BJ (cell line): ENCODE measurements at regions of chrX and their contacts with region 1.

Region 1: GRCh38 chrX:110146521-110146920 is 143.6 kb downstream of the TMEM164 start:
- DNase-seq: no peak
- H3K4me3 ChIP-seq: no peak overlapping the region
- H3K27me3 ChIP-seq: no peaks in the 10 kb centered on the region
- CTCF ChIP-seq: peak; percentile 64

Region 2: DNA sequence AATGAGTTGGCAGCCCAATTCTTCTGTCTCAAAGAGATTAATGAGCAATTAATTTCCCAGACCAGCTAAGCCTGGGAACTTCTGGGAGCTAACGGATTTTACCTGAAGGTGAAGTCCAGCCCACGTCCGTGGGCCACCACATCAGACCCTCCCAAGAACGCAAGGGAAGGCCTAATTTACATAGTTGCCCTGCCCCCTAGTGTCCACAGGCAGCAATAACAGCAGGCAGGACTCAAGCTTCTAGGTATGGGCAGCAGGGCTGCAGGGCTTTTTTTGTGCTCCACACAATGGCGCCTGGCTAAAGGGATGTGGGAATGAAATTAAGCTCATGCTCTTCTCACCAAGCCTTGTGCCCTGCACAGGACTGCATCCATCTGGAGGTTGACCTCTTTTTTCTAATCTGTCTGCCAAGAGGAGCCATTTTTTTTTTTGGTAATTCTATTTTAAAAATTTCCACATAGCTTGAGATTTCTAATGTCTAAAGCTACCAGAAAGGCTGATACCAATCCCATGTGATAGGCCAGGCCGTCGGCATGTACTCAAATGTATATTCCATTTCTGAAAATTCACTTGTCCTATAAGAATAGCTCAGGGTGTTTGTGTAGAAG is 255.5 kb before region 1 on chrX:
- CTCF ChIA-PET with region 1: interaction called, 11 read pairs
- POLR2A ChIA-PET with region 1: no interaction called
- DNase-seq: no peak
- H3K4me3 ChIP-seq: no peak overlapping the region
- H3K27me3 ChIP-seq: no peaks in the 10 kb centered on the region
- CTCF ChIP-seq: peak; percentile 83

Region 3: DNA sequence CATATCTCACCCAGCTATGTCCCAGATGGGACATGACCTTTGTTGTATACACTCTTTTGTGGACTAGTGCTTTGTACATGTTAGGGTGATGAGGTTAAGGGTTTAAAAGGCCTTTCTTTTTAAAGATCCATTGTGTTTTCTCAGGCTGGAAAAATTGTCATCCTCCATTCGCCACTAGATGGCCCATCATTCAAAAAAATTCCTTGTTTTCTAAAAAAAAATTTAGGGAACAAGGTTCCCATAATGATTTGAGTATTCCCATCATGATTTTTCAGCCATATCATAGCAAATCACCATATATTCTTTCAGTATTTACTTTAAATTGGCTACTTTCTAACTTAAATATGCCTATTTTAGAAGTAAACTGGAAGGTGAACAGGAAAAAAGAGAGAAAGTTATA is 235.5 kb before region 1 on chrX:
- CTCF ChIA-PET with region 1: interaction called, 73 read pairs
- POLR2A ChIA-PET with region 1: no interaction called
- DNase-seq: no peak
- H3K4me3 ChIP-seq: no peak overlapping the region
- H3K27me3 ChIP-seq: peaks cover 1% of the 10 kb centered on the region; the same call in 1 of the 2 replicates
- CTCF ChIP-seq: peak; percentile 45

Region 4: DNA sequence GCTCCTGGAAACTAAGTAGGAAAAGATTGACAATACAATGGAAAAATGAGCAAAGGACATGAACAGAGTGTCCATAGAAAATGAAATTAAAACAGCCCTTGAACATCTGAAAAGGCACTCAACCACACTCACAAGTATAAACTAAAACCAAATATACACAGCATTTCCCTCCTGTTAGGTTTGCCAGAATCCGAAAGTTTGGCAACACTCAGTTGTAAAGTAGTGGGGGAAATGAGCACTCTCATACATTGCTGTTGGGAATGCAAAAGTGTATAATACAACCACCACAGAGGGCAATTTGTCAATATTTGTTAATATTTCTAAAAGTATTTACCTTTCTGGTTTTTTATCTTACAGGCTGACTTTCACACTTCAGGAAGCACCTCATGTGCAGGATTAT is 227.8 kb before region 1 on chrX:
- CTCF ChIA-PET with region 1: interaction called, 14 read pairs
- POLR2A ChIA-PET with region 1: no interaction called
- DNase-seq: no peak
- H3K4me3 ChIP-seq: no peak overlapping the region
- H3K27me3 ChIP-seq: no peaks in the 10 kb centered on the region
- CTCF ChIP-seq: no peak

Region 5: DNA sequence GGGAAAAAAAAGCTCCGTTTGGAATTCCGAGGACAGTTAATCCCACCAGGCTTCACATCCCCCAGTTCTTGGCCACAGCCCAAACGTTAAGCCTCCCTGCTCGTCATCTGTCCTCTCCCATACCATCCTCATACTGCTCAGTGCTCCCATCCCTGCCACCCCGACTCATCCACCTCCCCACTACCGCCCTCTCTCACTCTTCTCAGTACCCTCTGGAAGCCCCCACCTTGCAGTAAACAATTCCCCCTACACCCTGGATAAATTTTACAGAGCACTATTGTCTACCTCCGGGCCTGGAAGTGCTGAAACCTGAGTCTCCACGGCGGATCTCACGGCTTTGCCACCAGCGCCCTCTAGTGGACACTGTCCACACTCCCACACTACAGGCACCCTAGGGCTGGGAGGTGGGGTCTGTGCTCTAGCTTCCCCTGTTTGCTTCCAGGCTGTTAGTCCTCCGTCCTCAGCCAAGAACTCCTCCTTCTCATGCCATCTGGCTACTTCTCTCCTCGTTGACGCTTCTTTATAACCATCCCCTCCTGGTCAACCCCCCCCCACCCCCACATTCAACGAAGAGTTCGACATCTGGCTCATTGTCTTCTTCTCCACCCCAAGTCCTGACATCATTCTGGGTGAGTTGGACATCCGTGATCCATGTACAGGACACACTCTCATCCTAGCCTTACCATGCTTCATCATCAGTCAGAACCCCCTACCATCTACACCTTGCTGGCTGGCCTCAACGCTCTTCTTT is 266.6 kb after region 1 on chrX:
- CTCF ChIA-PET with region 1: interaction called, 331 read pairs
- POLR2A ChIA-PET with region 1: no interaction called
- DNase-seq: no peak
- H3K4me3 ChIP-seq: no peak overlapping the region
- H3K27me3 ChIP-seq: no peaks in the 10 kb centered on the region
- CTCF ChIP-seq: peak; percentile 75

Region 6: DNA sequence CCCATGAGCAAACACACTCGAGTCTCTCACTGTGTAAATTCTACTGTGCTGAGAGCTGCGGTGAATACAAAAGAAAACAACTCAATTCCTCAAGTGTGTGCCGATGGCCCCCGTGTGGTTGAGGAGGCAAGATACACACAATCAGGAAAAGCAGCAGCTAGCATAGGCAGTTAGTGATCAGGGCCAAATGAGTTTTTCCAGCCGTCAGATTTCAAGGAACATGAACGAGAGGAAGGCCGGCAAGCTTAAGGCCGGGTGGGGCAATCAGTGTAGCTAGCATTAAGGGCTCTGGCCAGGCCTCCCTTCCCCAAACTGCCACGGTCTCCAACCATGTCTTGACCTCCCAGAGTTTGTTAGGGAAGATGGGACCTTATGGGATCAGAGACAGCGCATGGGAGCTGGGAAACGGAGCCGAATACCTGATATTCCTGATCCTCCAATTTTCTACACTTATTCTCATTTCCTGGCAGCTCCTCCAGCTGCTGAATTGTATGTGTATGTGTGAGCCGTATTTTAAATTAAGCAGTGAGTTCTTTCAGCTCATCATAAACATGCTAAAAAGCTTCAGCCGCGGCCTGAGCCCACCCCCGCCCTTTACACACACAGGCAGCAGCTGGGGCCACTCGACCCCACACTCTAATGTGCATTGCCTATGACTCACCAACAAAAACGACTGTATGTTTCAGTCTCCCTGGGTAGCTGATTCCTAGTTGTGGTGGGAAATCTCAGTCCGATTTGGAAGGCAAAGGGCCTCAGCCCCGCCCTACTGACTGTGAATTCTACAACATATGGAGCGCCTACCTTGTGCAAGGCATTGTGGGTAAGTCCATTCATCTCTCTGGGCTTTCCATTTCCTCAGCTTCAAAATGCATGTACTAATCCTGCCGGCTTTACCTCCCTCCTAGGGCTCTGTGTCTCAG is 272.1 kb after region 1 on chrX:
- CTCF ChIA-PET with region 1: interaction called, 331 read pairs
- POLR2A ChIA-PET with region 1: no interaction called
- DNase-seq: no peak
- H3K4me3 ChIP-seq: no peak overlapping the region
- H3K27me3 ChIP-seq: no peaks in the 10 kb centered on the region
- CTCF ChIP-seq: peak; percentile 61